Posterior vena cava (tissue), 2 donors: ENCODE measurements at regions of chr2 and their contacts with region 1.

Region 1: GRCh38 chr2:136497709-136498108 is 267.6 kb upstream of the THSD7B start:
- DNase-seq: no peak

Region 2: GRCh38 chr2:136444323-136444722 is 53.4 kb before region 1 on chr2:
- intact Hi-C with region 1: no loop called
- DNase-seq: no peak

Region 3: GRCh38 chr2:136479696-136480095 is 18.0 kb before region 1 on chr2:
- intact Hi-C with region 1: no loop called
- DNase-seq: no peak

Region 4: GRCh38 chr2:136527560-136527959 is 29.9 kb after region 1 on chr2:
- intact Hi-C with region 1: loop called in 1 of 2 experiments (anchors 1 kb)
- DNase-seq: no peak